Activated CD4-positive, alpha-beta memory T cell treated with anti-CD3 and anti-CD28 coated beads for 36 hours (primary cell): ENCODE measurements at regions of chr5 and their contacts with region 1.

Region 1: DNA sequence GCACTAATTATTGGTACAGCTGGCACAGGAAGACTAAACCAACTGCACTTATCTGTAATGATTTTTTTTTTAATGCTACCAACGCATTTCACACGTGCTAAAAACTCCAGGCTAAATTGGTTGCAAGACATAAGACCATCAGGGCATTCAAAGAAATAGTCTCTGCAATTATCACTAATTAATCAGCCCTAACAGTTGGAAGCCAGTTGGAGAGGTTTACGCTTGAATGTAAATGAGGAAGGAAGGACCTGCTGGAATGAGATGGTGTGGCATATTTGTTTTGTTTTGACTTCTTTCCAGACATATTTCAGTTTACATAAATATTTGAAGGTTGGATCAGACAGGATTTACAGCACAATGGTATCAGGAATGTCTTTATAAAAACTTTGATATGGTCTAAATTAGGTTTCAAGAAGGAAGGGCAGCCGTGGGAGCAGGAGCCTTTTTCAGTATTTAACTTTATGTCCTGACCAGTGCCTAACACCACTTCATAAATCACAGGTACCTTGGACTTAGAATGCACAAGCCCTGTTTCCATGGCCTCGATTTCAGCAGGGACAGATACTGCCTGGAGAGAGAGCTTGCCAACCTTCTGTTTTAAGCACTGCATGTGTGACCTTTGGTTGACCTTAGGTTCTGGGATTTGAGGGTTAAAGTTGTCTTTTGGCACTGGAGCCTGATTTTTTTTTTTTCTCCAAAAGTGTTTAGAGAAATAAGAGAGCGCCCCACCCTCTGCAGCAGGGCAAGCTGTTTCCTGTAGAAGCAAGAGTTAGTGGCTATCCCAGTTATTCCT is 199.8 kb upstream of the MAP3K1 start:
- DNase-seq: no peak
- H3K4me3 Mint-ChIP-seq: no peak overlapping the region
- H3K27ac Mint-ChIP-seq: no peak overlapping the region
- H3K4me1 Mint-ChIP-seq: peaks cover 63% of the 10 kb centered on the region
- H3K27me3 Mint-ChIP-seq: no peaks in the 10 kb centered on the region

Region 2: DNA sequence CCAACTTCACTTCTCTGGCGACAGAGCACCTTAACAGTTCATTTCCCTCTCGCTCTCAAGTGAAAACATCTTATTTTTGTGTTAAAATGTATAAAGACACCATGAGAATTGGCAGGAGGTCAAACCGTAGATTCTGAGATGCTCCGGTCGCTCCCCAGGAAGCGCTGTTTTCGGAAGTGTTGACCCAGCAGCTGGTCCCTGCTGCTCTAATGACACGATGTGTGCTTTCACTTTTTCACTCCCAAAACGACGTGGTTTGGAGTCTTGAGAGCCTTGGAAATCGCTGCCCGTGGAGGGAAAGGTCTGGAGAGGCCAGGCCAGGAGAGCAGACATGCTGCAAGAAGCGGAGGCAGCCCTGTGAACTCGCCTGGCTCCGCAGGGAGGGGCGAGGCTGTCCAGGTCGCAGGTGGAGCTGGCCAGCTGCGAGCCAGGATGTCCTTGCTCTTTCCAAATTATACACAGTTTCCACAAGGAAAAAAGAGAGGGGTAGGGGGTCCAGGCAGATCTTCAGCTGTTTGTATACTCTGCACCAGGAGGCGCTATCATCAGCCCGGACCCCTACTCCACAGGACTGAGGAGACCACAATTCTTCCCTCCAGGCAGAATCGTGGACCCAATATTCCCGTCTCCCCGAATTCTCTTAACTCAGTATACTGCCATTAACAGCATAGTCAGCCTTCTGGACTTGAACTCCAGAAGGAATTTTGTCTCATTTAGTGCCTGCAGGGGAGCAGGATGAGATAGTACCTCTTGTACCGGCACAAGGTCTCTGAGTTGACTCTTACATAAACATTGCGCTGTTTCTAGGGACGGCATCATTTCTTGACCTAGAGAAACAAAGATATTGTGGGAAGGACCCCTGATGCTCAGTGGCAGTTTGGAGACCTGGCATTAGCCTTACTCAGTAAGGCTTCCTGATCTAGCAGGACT is 133.9 kb before region 1 on chr5:
- CTCF ChIA-PET with region 1: no interaction called
- POLR2A ChIA-PET with region 1: no interaction called
- intact Hi-C with region 1: loop called (anchors 10 kb)
- DNase-seq: peak; percentile 32
- H3K4me3 Mint-ChIP-seq: peak overlapping the region; percentile 75
- H3K27ac Mint-ChIP-seq: peak overlapping the region; percentile 75
- H3K4me1 Mint-ChIP-seq: peaks cover 41% of the 10 kb centered on the region
- H3K27me3 Mint-ChIP-seq: no peaks in the 10 kb centered on the region

Region 3: GRCh38 chr5:56522960-56523359 is 92.6 kb before region 1 on chr5:
- CTCF ChIA-PET with region 1: no interaction called
- POLR2A ChIA-PET with region 1: no interaction called
- intact Hi-C with region 1: no loop called
- DNase-seq: no peak
- H3K4me3 Mint-ChIP-seq: no peak overlapping the region
- H3K27ac Mint-ChIP-seq: no peak overlapping the region
- H3K4me1 Mint-ChIP-seq: peaks cover 15% of the 10 kb centered on the region
- H3K27me3 Mint-ChIP-seq: no peaks in the 10 kb centered on the region

Region 4: DNA sequence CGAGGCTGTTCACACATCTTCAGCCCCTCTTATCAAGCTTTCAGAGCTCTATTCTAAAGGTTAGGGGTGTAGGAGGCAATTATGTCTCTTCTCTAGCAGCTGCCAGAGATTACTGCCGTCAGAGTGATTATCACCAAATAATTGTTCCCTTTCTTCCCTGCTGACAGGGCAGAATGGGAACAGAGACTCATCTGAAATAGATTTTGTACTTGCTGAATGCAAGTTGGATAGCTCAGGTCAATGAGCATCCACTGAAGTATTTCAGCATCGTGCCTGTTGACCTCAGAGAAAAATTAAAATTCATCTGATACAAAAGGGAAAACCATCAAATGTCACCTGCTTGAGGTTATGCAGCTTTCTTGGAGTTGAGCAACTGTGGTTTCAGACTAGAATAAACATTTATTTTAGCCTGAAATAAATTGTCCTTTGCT is 13.9 kb before region 1 on chr5:
- CTCF ChIA-PET with region 1: no interaction called
- POLR2A ChIA-PET with region 1: no interaction called
- intact Hi-C with region 1: no loop called
- DNase-seq: no peak
- H3K4me3 Mint-ChIP-seq: no peak overlapping the region
- H3K27ac Mint-ChIP-seq: no peak overlapping the region
- H3K4me1 Mint-ChIP-seq: peaks cover 45% of the 10 kb centered on the region
- H3K27me3 Mint-ChIP-seq: no peaks in the 10 kb centered on the region

Region 5: DNA sequence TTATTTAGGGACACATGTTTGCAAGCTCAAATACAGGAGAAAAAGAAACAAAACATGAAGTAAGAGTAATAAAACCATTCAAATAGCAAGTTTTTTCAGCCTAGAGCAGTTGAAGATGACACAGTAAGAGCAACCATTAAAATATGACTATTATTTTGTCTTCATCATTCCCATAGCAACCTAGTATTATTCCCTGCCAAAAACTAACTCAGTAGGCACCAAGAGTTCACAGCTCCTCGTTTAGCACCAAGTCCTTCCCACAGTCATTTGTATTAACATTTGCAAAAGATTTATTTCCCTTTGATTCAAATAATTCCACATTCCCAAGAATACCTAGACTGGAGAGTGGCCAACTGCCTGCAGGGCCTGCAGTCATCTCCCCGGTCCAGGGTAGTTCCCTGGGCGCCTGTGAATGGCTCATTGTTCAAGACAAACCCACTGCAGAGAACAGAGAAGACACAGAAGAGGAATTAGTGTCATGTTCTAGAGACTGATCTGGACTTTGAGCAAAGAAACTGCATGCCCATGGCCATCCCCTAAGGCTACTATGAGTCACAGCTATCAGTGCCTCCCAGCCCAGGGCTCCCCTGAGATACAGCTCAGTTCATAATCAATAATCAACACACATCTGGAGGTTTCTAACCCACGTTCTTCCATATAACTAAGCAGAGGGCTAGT is 60.7 kb after region 1 on chr5:
- CTCF ChIA-PET with region 1: no interaction called
- POLR2A ChIA-PET with region 1: no interaction called
- intact Hi-C with region 1: no loop called
- DNase-seq: no peak
- H3K4me3 Mint-ChIP-seq: no peak overlapping the region
- H3K27ac Mint-ChIP-seq: no peak overlapping the region
- H3K4me1 Mint-ChIP-seq: peaks cover 27% of the 10 kb centered on the region
- H3K27me3 Mint-ChIP-seq: no peaks in the 10 kb centered on the region